HEK293 (cell line): ENCODE measurements at regions of chr9 and their contacts with region 1.

Region 1: DNA sequence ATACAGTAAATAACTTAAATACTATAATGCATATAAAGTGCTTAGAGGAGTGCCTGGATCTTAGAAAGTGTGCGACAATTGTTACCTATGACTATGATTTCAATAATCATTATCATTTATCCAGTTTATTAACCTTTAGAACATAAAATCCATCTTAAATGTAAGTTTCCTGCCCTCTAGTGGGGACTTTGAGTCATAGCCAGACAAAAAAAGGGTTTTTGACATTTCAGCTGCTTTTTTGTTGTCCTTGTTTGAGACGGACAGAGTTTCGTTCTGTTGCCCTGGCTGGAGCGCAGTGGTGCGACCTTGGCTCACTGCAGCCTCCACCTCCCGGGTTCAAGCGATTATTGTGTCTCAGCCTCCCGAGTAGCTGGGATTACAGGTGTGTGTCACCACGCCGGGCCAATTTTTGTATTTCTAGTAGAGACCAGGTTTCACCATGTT is 9.7 kb upstream of the C9orf152 start:
- H3K4me3 ChIP-seq: no peak overlapping the region
- H3K27ac ChIP-seq: no peak overlapping the region
- H3K4me1 ChIP-seq: no peaks in the 10 kb centered on the region
- CTCF ChIP-seq: peak; percentile 25; the same call in 1 of the 2 replicates

Region 2: DNA sequence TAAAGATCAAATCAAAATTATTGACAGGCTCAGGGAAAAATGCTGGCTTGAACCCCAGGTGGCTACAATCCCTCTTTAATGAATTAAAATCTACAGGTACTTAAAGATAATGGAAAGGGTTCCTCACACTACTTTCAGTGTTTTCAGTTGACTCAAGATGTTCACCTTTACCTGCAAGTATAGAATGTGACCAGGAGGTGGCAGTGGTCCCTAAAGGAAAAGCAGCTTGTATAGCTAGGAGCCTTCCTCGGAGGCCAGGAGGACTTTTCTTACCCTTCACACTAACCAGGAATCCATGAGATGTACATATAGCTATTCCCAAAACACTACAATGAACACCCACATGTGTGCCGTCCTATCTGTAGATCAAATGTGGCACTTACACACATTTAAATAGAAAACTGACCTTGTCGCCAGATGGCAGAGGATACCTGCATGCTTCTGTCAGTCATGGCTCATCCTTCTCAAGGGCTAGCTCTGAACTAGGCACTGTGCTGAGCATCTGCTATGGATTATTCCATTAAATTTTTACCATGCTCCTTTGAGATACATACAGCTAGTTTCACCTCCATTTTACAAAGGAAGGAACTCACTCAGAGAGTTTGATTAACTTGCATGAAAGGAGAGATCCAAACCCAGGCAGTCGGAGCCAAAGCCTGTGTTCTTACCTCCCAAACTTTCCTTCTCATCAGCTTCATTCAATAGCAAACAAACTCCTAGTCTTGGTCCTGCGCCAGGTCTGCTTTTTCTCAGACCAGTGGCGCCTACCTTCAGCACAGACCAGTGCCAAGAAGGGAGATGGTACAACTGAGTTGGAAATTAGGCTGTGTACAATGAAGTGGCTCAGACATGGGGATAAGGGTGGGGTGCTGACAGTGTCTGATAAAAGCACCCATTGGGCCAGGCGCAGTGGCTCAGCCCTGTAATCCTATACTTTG is 34.2 kb before region 1 on chr9:
- CTCF ChIA-PET with region 1: interaction called, 112 read pairs
- POLR2A ChIA-PET with region 1: no interaction called
- H3K4me3 ChIP-seq: no peak overlapping the region
- H3K27ac ChIP-seq: no peak overlapping the region
- H3K4me1 ChIP-seq: no peaks in the 10 kb centered on the region
- CTCF ChIP-seq: no peak

Region 3: DNA sequence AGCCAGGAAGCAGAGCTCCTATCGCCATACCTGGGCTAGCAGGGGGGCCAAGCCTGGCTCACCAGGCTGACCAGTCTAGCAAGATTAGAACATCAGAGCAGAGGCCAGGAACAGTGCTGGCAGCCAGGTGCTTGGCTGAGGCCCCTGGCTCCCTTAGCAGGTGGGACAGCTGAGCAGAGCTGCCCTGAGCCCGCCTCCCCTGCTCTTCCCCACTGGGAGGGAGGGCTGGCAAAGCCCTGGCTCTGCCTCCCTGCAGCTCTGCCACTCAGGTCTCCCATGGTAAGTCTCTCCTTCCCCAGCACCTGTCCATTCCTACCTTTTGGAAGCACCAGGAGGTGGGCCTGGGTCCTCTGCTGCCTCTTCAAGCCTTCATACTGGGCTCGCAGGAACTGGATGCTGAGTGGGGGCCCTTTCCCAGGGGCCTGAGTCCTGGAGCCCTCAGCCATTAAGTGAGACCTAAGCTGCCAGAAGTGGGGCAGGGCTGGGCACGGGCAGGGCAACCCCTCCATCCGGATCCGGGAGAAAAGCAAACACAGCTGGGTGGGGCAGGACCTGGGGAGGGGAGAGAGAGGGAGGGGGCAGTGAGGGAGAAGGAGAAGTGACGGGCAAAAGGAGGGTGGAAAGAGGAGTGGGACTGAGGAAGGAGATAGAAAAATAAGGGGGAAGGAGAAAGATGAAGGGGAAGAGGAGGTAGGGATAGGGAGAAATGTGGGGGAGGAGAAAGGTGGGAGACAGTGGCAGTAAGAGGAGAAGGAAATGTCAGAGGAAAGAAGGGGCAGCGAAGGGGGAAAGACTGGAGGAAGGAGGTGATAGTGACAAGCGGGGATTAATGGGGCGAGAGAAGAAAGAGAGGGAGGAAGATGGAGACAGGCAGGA is 10.4 kb before region 1 on chr9:
- CTCF ChIA-PET with region 1: interaction called, 10 read pairs
- POLR2A ChIA-PET with region 1: no interaction called
- H3K4me3 ChIP-seq: no peak overlapping the region
- H3K27ac ChIP-seq: no peak overlapping the region
- H3K4me1 ChIP-seq: no peaks in the 10 kb centered on the region
- CTCF ChIP-seq: no peak

Region 4: DNA sequence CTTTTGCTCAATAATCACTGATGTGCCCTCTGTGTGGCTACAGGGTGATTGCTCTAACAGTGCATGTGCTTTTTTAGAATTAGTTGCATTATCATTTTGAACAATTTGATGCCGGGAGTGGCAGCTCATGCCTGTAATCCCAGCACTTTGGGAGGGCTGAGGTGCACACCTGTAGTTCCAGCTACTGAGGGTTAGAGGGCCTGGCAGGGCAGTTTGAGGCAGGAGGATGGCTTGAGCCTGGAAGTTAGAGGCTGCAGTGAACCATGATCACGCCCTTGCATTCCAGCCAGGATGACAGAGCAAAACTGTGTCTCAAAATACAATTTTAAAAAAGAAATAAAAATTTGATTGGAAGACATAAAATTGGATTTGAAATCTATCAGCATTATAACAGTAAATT is 11.3 kb after region 1 on chr9:
- CTCF ChIA-PET with region 1: interaction called, 14 read pairs
- POLR2A ChIA-PET with region 1: no interaction called
- H3K4me3 ChIP-seq: no peak overlapping the region
- H3K27ac ChIP-seq: no peak overlapping the region
- H3K4me1 ChIP-seq: no peaks in the 10 kb centered on the region
- CTCF ChIP-seq: no peak

Region 5: GRCh38 chr9:110248356-110248755 is 30.7 kb after region 1 on chr9:
- CTCF ChIA-PET with region 1: no interaction called
- POLR2A ChIA-PET with region 1: no interaction called
- H3K4me3 ChIP-seq: no peak overlapping the region
- H3K27ac ChIP-seq: no peak overlapping the region
- H3K4me1 ChIP-seq: 0 out of 2 replicates have a peak, but pooled peaks cover 1% of the 10 kb centered on the region
- CTCF ChIP-seq: no peak